Dendritic cell treated with granulocyte-macrophage colony-stimulating factor and Interleukin-4, amounts not matched to agents 40 ng/mL and 50 ng/mL, for 4 days (primary cell): ENCODE measurements at regions of chr21 and their contacts with region 1.

Region 1: GRCh38 chr21:15682186-15682895 is 47.4 kb upstream of the USP25 start:
- H3K4me3 Mint-ChIP-seq: peak overlapping the region; percentile 66
- H3K27ac Mint-ChIP-seq: peak overlapping the region; percentile 82
- H3K4me1 Mint-ChIP-seq: peaks cover 33% of the 10 kb centered on the region
- H3K27me3 Mint-ChIP-seq: no peaks in the 10 kb centered on the region

Region 2: GRCh38 chr21:14877570-14878228 is 804.6 kb before region 1 on chr21:
- intact Hi-C with region 1: loop called (anchors 10 kb)
- H3K4me3 Mint-ChIP-seq: no peak overlapping the region
- H3K27ac Mint-ChIP-seq: no peak overlapping the region
- H3K4me1 Mint-ChIP-seq: peaks cover 48% of the 10 kb centered on the region
- H3K27me3 Mint-ChIP-seq: peaks cover 10% of the 10 kb centered on the region

Region 3: GRCh38 chr21:15729674-15730483 is 47.5 kb after region 1 on chr21 and contains the start of gene USP25:
- intact Hi-C with region 1: loop called (anchors 2 kb)
- H3K4me3 Mint-ChIP-seq: peak within 1 kb of the TSS; percentile 83
- H3K27ac Mint-ChIP-seq: peak within 1 kb of the TSS; percentile 87
- H3K4me1 Mint-ChIP-seq: peaks cover 6% of the 10 kb centered on the region
- H3K27me3 Mint-ChIP-seq: no peaks in the 10 kb centered on the region

Region 4: DNA sequence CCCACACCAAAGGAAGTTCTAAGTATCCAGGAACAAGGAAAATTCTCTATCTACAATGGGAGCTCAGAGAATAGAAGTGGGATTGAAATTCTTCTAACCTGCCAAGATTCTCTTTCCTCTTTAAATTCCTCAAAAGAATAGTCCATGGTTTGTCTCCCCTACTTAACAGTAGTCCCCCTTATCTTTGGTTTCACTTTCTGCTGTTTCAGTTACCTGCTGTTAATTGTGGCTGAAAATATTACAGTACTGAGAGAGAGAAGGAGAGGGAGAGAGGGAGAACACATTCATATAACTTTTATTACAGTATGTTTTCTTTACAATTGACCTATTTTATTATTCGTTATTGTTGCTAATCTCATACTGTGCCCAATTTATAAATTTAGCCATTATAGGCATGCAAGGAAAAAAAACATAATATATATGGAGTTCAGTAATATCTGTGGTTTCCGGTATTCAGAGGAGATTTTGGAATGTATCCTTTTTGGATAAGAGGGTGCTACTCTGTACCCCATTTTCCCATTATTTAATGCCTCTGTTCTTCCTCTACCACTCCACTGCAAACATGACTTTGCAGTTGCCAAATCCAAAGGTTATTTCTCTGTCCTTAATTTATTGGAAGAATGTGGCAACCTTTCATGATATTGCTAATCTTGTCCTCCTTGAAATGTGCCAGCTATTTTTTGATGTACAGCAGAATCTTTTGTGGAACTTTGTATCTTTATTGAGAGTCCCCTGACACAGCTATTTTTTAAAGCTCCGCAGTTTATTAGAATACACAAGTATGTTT is 115.4 kb after region 1 on chr21:
- intact Hi-C with region 1: no loop called
- H3K4me3 Mint-ChIP-seq: no peak overlapping the region
- H3K27ac Mint-ChIP-seq: no peak overlapping the region
- H3K4me1 Mint-ChIP-seq: peaks cover 15% of the 10 kb centered on the region
- H3K27me3 Mint-ChIP-seq: no peaks in the 10 kb centered on the region

Region 5: GRCh38 chr21:15976807-15977206 is 294.5 kb after region 1 on chr21:
- intact Hi-C with region 1: no loop called
- H3K4me3 Mint-ChIP-seq: no peak overlapping the region
- H3K27ac Mint-ChIP-seq: no peak overlapping the region
- H3K4me1 Mint-ChIP-seq: no peaks in the 10 kb centered on the region
- H3K27me3 Mint-ChIP-seq: no peaks in the 10 kb centered on the region